GM10248 (cell line): ENCODE measurements at regions of chr16 and their contacts with region 1.

Region 1: GRCh38 chr16:23710008-23710407 is 3.0 kb downstream of the ERN2 start:
- DNase-seq: no peak
- CTCF ChIP-seq: no peak

Region 2: GRCh38 chr16:23728112-23728477 is 18.1 kb after region 1 on chr16:
- CTCF ChIA-PET with region 1: interaction called, 10 read pairs
- POLR2A ChIA-PET with region 1: no interaction called
- DNase-seq: no peak
- CTCF ChIP-seq: no peak

Region 3: GRCh38 chr16:23784811-23785447 is 74.9 kb after region 1 on chr16:
- CTCF ChIA-PET with region 1: no interaction called
- POLR2A ChIA-PET with region 1: no interaction called
- DNase-seq: no peak
- CTCF ChIP-seq: no peak